ENCODE measurements at regions of chr18 and their contacts with region 1.

Region 1: DNA sequence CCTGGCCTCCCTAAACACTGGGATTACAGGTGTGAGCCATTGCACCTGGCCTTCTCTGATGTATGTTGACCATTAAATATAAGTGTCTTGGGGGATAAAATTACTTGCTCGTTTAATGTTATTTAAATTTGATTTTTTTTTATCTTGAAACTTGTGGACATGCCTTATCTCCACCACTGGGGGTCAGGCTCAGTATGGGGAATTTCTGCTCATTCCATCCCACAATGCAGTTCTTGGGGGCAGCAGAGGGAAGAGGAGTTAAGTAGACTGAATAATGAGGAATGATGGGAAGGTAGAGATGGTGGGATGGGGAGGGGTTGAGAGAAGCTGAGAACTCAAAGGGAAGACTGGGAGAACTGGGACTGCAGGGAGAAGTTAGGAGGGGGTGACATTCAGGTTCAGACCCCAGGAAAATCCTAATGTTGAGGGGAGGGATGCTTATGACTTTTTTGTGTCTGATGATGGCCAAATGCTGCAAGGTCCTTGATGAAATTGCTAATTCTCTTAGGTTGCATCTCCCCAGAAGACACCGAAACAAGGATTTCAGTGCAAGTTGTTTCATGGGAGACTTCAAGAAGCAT is 174.2 kb downstream of the MIB1 start:
- DNase-seq: no peak
- ATAC-seq: no peak
- H3K4me3 Mint-ChIP-seq: no peak overlapping the region
- H3K27ac Mint-ChIP-seq: no peak overlapping the region
- H3K4me1 Mint-ChIP-seq: no peaks in the 10 kb centered on the region
- H3K27me3 Mint-ChIP-seq: peaks cover 11% of the 10 kb centered on the region

Region 2: GRCh38 chr18:21053127-21053526 is 861.7 kb before region 1 on chr18:
- CTCF ChIA-PET with region 1: no interaction called
- POLR2A ChIA-PET with region 1: no interaction called
- intact Hi-C with region 1: no loop called
- DNase-seq: no peak
- ATAC-seq: no peak
- H3K4me3 Mint-ChIP-seq: no peak overlapping the region
- H3K27ac Mint-ChIP-seq: no peak overlapping the region
- H3K4me1 Mint-ChIP-seq: peaks cover 32% of the 10 kb centered on the region
- H3K27me3 Mint-ChIP-seq: no peaks in the 10 kb centered on the region

Region 3: DNA sequence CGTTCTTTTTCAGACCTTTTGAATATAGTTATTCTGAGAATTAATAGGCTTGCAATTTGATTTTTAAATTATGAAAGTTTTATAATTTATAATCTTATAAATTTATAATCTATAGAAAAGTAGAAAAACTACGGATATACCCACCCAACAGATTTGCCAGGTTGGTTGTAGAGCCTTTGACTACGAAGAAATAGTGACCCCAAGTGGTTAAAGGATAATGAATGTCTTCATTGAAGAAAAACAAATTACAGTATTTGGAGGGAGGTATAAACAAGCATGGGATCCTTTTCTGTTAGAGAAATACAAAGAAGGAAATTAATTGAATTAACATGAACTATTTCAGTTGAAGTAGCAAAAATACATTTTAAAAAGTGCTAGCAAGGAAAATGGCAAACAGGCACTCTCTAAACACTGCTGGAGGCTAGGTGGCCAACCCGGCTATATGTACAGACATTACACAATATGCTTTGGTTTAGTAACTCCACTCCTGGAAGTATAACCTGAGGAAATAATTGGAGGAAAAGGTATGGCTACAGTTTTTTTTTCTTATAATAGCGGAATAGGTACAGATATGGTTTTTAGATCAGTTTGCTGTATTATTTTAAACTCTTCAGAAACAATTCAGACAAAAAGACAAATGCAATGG is 63.4 kb before region 1 on chr18:
- CTCF ChIA-PET with region 1: no interaction called
- POLR2A ChIA-PET with region 1: no interaction called
- intact Hi-C with region 1: no loop called
- DNase-seq: no peak
- ATAC-seq: no peak
- H3K4me3 Mint-ChIP-seq: no peak overlapping the region
- H3K27ac Mint-ChIP-seq: no peak overlapping the region
- H3K4me1 Mint-ChIP-seq: peaks cover 7% of the 10 kb centered on the region
- H3K27me3 Mint-ChIP-seq: no peaks in the 10 kb centered on the region

Region 4: GRCh38 chr18:22032392-22032961 is 117.6 kb after region 1 on chr18:
- CTCF ChIA-PET with region 1: no interaction called
- POLR2A ChIA-PET with region 1: no interaction called
- intact Hi-C with region 1: loop called in 1 of 2 experiments (anchors 10 kb)
- DNase-seq: no peak
- ATAC-seq: no peak
- H3K4me3 Mint-ChIP-seq: no peak overlapping the region
- H3K27ac Mint-ChIP-seq: no peak overlapping the region
- H3K4me1 Mint-ChIP-seq: no peaks in the 10 kb centered on the region
- H3K27me3 Mint-ChIP-seq: no peaks in the 10 kb centered on the region

Region 5: DNA sequence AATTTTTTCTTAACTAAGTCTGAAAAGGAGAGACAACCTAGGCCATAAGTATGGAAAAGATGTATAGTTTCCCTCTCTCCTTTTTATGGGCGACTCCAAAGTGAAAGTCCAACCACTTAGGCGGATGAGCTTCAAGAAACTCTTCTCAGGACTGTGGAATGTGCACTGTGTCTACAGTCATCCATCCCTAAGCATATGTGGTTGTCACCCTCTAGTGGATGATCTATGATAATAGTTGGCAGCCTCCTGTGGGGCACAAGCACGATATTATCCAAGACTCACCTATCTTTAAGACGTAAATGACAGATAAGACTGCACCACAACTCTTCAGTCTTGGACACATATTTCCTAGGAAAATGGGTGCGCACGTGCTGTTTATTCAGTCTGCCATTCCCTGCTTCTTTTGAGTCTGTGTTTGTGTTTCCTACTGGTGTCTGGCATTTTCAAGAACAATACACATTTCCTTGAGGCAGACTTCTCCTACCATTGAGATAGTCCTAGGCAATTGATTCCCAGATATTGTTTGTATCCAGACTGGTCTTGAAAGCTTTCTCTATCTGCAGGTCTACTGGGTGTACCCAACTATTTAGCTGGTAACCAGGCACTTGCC is 648.4 kb after region 1 on chr18:
- CTCF ChIA-PET with region 1: no interaction called
- POLR2A ChIA-PET with region 1: no interaction called
- intact Hi-C with region 1: loop called in 1 of 2 experiments (anchors 5 kb)
- DNase-seq: peak; percentile 9
- ATAC-seq: peak; percentile 55
- H3K4me3 Mint-ChIP-seq: no peak overlapping the region
- H3K27ac Mint-ChIP-seq: no peak overlapping the region
- H3K4me1 Mint-ChIP-seq: peaks cover 5% of the 10 kb centered on the region
- H3K27me3 Mint-ChIP-seq: peaks cover 29% of the 10 kb centered on the region

Measured in activated CD4-positive, alpha-beta T cell treated with anti-CD3 and anti-CD28 coated beads for 36 hours (primary cell).